Prostate gland (tissue), 2 donors: ENCODE measurements at regions of chr20 and their contacts with region 1.

Region 1: DNA sequence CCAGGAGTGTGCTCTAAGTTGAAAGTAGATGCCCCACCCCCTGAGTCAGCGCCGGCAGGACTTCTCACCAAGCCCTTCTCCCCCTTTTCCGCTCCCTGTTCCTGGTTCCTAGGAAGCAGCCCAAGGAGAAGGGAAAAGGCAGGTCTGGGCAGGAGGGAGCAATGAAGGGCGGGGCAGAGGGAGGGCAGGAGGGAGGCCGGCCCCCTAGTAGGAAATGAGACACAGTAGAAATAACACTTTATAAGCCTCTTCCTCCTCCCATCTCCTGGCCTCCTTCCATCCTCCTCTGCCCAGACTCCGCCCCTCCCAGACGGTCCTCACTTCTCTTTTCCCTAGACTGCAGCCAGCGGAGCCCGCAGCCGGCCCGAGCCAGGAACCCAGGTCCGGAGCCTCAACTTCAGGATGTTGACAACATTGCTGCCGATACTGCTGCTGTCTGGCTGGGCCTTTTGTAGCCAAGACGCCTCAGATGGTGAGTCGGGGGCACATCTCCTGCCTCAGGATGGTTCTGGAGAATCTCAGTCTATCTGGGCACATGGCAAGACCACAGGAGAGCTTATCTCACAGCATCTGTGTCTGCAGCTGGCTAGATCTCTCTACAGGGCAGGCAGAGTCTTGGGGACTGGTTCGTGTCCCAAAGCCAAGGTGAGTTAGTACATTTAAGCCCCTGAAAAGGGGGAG is at the start of gene PROCR:
- DNase-seq: peak; percentile 86
- H3K4me3 ChIP-seq: peak within 1 kb of the TSS; percentile 23 to 24
- H3K27ac ChIP-seq: peak within 1 kb of the TSS; percentile 69 to 70
- H3K4me1 ChIP-seq: no peaks in the 10 kb centered on the region
- H3K27me3 ChIP-seq: no peaks in the 10 kb centered on the region
- CTCF ChIP-seq: no peak
- POLR2A ChIP-seq: no peak
- total RNA-seq, gene PROCR: 11.2 to 17.6 TPM

Region 2: GRCh38 chr20:35092524-35093266 is 79.2 kb before region 1 on chr20 and contains the start of gene TRPC4AP:
- intact Hi-C with region 1: no loop called
- DNase-seq: peak; percentile 81
- H3K4me3 ChIP-seq: peak within 1 kb of the TSS; percentile 71 to 96
- H3K27ac ChIP-seq: peak within 1 kb of the TSS; percentile 94
- H3K4me1 ChIP-seq: peaks cover 3% of the 10 kb centered on the region
- H3K27me3 ChIP-seq: no peaks in the 10 kb centered on the region
- CTCF ChIP-seq: peak; percentile 97 to 99 (median 98)
- POLR2A ChIP-seq: peak; percentile 83
- total RNA-seq, gene TRPC4AP: 65.4 to 76.6 TPM

Region 3: DNA sequence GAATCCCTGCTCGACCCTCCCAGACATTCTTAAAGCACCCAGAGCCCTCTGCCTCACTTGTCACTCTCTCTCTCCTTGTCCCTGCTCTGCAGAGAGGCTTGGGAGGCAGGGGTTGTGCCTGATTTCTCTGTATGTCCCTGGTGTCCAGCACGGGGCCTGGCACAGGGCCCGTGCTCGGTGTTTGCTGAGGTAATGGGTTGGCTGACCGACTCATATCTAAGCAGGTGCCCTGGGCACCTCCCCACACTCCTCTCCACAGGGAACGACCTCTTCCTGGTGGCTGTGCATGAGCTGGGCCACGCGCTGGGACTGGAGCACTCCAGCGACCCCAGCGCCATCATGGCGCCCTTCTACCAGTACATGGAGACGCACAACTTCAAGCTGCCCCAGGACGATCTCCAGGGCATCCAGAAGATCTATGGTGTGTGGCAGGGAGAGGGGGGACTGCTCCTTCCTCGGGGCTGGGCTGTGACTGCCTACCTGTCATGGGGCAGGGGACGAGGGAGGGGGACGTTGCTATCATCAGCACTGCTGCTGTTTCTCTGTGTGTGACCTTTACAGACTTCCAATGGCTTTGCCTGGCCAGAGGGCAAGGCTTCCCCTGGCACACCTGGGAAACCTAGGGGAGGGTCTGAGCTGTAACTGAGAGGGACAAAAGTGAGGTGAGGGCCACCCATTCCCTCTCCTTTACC is 91.8 kb after region 1 on chr20:
- intact Hi-C with region 1: loop called (anchors 1 kb)
- DNase-seq: peak; percentile 33
- H3K4me3 ChIP-seq: no peak overlapping the region
- H3K27ac ChIP-seq: peak overlapping the region; percentile 60 to 67
- H3K4me1 ChIP-seq: peaks cover 7% of the 10 kb centered on the region
- H3K27me3 ChIP-seq: no peaks in the 10 kb centered on the region
- CTCF ChIP-seq: no peak
- POLR2A ChIP-seq: no peak